Dendritic cell treated with granulocyte-macrophage colony-stimulating factor and Interleukin-4, amounts not matched to agents 40 ng/mL and 50 ng/mL, for 4 days (primary cell): ENCODE measurements at regions of chr19 and their contacts with region 1.

Region 1: DNA sequence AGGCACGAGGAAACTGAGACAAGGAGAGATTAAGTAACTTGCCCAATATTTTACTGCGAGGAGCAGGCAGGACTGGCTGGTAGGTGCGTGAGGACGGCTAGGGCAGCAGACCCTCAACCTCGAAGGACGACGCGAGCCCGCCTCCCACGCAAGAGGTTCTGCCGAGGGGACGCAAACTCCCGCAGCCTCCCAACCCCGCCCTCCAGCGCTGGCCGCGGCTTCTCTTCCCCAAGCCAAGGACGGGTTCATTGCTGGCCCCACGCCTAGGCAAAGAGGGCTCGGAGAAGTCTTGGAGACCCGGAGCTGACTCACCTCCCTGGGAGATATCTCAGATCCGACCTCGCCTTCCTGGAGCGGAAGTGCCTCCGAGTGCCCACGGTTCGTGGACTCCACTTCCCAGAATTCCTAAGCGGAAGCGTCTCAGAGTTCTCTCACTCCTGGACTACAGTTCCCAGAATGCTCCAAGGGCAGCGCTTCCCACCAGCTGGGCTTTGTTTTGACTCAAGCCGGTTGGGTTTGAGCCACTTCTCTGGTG is at the start of gene ZNF235:
- H3K4me3 Mint-ChIP-seq: peak within 1 kb of the TSS; percentile 83
- H3K27ac Mint-ChIP-seq: peak within 1 kb of the TSS; percentile 81
- H3K4me1 Mint-ChIP-seq: peaks cover 11% of the 10 kb centered on the region
- H3K27me3 Mint-ChIP-seq: peaks cover 3% of the 10 kb centered on the region

Region 2: DNA sequence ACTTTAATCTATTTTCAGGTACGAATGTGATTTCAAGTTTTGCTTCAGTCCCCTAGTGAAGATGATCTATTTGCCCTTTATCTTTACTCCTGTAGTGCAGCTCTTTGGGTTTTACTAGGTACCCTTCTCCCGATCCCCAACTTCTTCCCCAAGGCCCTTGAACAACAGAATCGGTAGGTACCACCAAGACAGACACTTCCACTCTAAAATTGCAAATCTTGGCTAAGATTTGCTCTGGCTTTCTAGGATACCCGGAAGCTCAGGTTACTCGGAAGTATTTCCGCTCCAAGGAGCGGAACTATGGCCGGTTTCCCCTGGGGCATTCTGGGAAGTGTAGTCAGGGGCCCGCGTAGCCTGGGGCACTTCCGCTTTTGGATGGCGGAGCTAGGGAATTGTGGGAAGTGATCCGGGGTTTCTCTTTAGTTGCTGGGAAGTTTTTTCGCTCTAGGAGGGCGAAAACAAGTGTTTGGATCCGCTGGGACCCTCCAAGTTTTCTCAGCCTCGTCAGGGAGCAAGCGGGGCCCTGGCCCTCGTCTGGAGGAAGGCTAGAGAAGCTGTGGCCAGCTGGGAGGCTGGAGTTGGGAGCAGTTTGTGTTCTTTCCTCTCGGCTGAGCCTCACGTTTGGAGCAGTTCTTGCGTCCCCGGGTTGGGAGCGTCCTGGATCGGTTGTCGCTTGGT is 97.5 kb before region 1 on chr19:
- intact Hi-C with region 1: loop called (anchors 2 kb)
- H3K4me3 Mint-ChIP-seq: peak overlapping the region; percentile 96
- H3K27ac Mint-ChIP-seq: peak overlapping the region; percentile 98
- H3K4me1 Mint-ChIP-seq: peaks cover 12% of the 10 kb centered on the region
- H3K27me3 Mint-ChIP-seq: peaks cover 11% of the 10 kb centered on the region

Region 3: DNA sequence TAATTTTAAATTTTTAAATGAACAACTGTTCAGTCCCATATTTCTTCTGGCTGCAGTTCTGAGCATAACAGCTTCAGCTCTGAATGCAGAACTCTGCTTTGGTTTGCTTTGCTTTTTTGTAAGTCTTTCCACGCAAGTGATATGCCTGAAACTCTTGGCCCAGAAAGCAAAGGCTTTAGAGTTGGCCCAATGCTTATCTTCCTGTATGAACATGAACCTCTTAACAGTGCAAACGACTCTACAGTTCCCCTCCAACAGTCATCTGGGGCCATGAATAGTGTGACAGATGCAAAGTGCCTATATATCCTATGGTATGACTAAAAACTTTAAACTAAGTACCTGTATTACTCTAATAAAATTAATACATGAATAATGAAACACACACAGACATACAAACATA is 37.1 kb after region 1 on chr19:
- intact Hi-C with region 1: no loop called
- H3K4me3 Mint-ChIP-seq: no peak overlapping the region
- H3K27ac Mint-ChIP-seq: no peak overlapping the region
- H3K4me1 Mint-ChIP-seq: no peaks in the 10 kb centered on the region
- H3K27me3 Mint-ChIP-seq: no peaks in the 10 kb centered on the region

Region 4: GRCh38 chr19:44356383-44357111 is 51.8 kb after region 1 on chr19 and contains the start of gene ZNF112:
- intact Hi-C with region 1: loop called (anchors 5 kb)
- H3K4me3 Mint-ChIP-seq: peak within 1 kb of the TSS; percentile 80
- H3K27ac Mint-ChIP-seq: peak within 1 kb of the TSS; percentile 58
- H3K4me1 Mint-ChIP-seq: peaks cover 14% of the 10 kb centered on the region
- H3K27me3 Mint-ChIP-seq: peaks cover 2% of the 10 kb centered on the region